ENCODE measurements at regions of chr2 and their contacts with region 1.

Region 1: GRCh38 chr2:17845806-17846205 is 29.5 kb downstream of the MSGN1 start:
- DNase-seq: no peak
- H3K4me3 Mint-ChIP-seq: no peak overlapping the region
- H3K27ac Mint-ChIP-seq: no peak overlapping the region
- H3K4me1 Mint-ChIP-seq: no peaks in the 10 kb centered on the region
- H3K27me3 Mint-ChIP-seq: no peaks in the 10 kb centered on the region
- CTCF ChIP-seq: no peak

Region 2: GRCh38 chr2:17765408-17765807 is 80.4 kb before region 1 on chr2:
- CTCF ChIA-PET with region 1: no interaction called
- POLR2A ChIA-PET with region 1: no interaction called
- intact Hi-C with region 1: no loop called
- DNase-seq: no peak
- H3K4me3 Mint-ChIP-seq: no peak overlapping the region
- H3K27ac Mint-ChIP-seq: no peak overlapping the region
- H3K4me1 Mint-ChIP-seq: peaks cover 1% of the 10 kb centered on the region
- H3K27me3 Mint-ChIP-seq: no peaks in the 10 kb centered on the region
- CTCF ChIP-seq: no peak

Region 3: GRCh38 chr2:17830053-17831034 is 15.5 kb before region 1 on chr2:
- CTCF ChIA-PET with region 1: interaction called, 12 read pairs
- POLR2A ChIA-PET with region 1: no interaction called
- intact Hi-C with region 1: no loop called
- DNase-seq: peak; percentile 83
- H3K4me3 Mint-ChIP-seq: peak overlapping the region; percentile 48
- H3K27ac Mint-ChIP-seq: no peak overlapping the region
- H3K4me1 Mint-ChIP-seq: peaks cover 6% of the 10 kb centered on the region
- H3K27me3 Mint-ChIP-seq: no peaks in the 10 kb centered on the region
- CTCF ChIP-seq: peak; percentile 86